Activated T-helper 1 cell treated with anti-CD3 and anti-CD28 coated beads, Interleukin-12 subunit alpha, Interleukin-12 subunit beta, Interleukin-2, Interleukin-4 antibody, amounts not matched to agents 30 ng/mL and 10 ng/mL and 1 ng/mL, durations not matched to agents 14 hours and 24 hours and 36 hours (primary cell): ENCODE measurements at regions of chr12 and their contacts with region 1.

Region 1: GRCh38 chr12:54596526-54596946 is 8.1 kb upstream of the PPP1R1A start:
- DNase-seq: peak; percentile 9
- H3K4me3 Mint-ChIP-seq: no peak overlapping the region
- H3K27ac Mint-ChIP-seq: no peak overlapping the region
- H3K4me1 Mint-ChIP-seq: peaks cover 7% of the 10 kb centered on the region
- H3K27me3 Mint-ChIP-seq: peaks cover 8% of the 10 kb centered on the region

Region 2: DNA sequence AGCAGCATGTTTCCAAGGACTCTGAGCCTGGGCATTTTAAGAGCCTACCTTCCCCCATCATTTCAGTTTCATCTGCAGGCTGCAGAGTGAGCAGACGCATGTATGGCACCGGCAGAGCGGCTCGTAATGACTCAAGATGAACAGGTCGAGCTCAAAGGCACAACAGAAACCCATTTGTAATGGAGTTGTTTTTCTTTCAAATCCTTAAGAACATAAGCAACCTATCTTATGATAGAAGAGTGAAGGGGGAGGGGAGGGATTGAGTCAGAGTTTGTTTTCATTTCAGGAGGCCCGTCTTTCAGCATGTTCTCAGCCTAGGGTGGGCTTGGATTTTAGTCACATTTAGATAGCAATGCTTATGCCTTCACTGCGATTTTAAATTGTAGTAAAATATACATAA is 789.8 kb before region 1 on chr12:
- intact Hi-C with region 1: no loop called
- DNase-seq: no peak
- H3K4me3 Mint-ChIP-seq: no peak overlapping the region
- H3K27ac Mint-ChIP-seq: no peak overlapping the region
- H3K4me1 Mint-ChIP-seq: no peaks in the 10 kb centered on the region
- H3K27me3 Mint-ChIP-seq: peaks cover 14% of the 10 kb centered on the region

Region 3: GRCh38 chr12:54526812-54527630 is 69.5 kb before region 1 on chr12:
- intact Hi-C with region 1: loop called (anchors 2 kb)
- DNase-seq: no peak
- H3K4me3 Mint-ChIP-seq: no peak overlapping the region
- H3K27ac Mint-ChIP-seq: no peak overlapping the region
- H3K4me1 Mint-ChIP-seq: peaks cover 10% of the 10 kb centered on the region
- H3K27me3 Mint-ChIP-seq: no peaks in the 10 kb centered on the region

Region 4: GRCh38 chr12:54622459-54623183 is 26.1 kb after region 1 on chr12:
- intact Hi-C with region 1: no loop called
- DNase-seq: no peak
- H3K4me3 Mint-ChIP-seq: no peak overlapping the region
- H3K27ac Mint-ChIP-seq: no peak overlapping the region
- H3K4me1 Mint-ChIP-seq: no peaks in the 10 kb centered on the region
- H3K27me3 Mint-ChIP-seq: peaks cover 44% of the 10 kb centered on the region